ENCODE measurements at regions of chr1 and their contacts with region 1.

Region 1: GRCh38 chr1:231162297-231162969 is 575 bp downstream of the TRIM67 start:
- DNase-seq: no peak
- H3K4me3 ChIP-seq: peak overlapping the region; percentile 34; the same call in 1 of the 2 replicates
- H3K27ac ChIP-seq: no peak overlapping the region
- H3K27me3 ChIP-seq: peaks cover 42% of the 10 kb centered on the region
- CTCF ChIP-seq: no peak

Region 2: GRCh38 chr1:230930986-230931385 is 231.4 kb before region 1 on chr1:
- CTCF ChIA-PET with region 1: no interaction called
- POLR2A ChIA-PET with region 1: interaction called, 11 read pairs
- DNase-seq: no peak
- H3K4me3 ChIP-seq: no peak overlapping the region
- H3K27ac ChIP-seq: no peak overlapping the region
- H3K27me3 ChIP-seq: no peaks in the 10 kb centered on the region
- CTCF ChIP-seq: no peak

Measured in AG04450 (cell line).